BJ (cell line): ENCODE measurements at regions of chr21 and their contacts with region 1.

Region 1: GRCh38 chr21:37251294-37251634 is 15.9 kb downstream of the VPS26C start:
- DNase-seq: no peak
- H3K4me3 ChIP-seq: no peak overlapping the region
- H3K27me3 ChIP-seq: no peaks in the 10 kb centered on the region
- CTCF ChIP-seq: no peak

Region 2: GRCh38 chr21:36847171-36847570 is 404.1 kb before region 1 on chr21:
- CTCF ChIA-PET with region 1: no interaction called
- POLR2A ChIA-PET with region 1: no interaction called
- DNase-seq: peak; percentile 33
- H3K4me3 ChIP-seq: no peak overlapping the region
- H3K27me3 ChIP-seq: no peaks in the 10 kb centered on the region
- CTCF ChIP-seq: no peak

Region 3: GRCh38 chr21:37263827-37264600 is 12.8 kb after region 1 on chr21:
- CTCF ChIA-PET with region 1: interaction called, 10 read pairs
- POLR2A ChIA-PET with region 1: no interaction called
- DNase-seq: no peak
- H3K4me3 ChIP-seq: no peak overlapping the region
- H3K27me3 ChIP-seq: no peaks in the 10 kb centered on the region
- CTCF ChIP-seq: 0 out of 2 replicates have a peak, but pooled peaks have one; percentile 7